ENCODE measurements at regions of chr19 and their contacts with region 1.

Region 1: DNA sequence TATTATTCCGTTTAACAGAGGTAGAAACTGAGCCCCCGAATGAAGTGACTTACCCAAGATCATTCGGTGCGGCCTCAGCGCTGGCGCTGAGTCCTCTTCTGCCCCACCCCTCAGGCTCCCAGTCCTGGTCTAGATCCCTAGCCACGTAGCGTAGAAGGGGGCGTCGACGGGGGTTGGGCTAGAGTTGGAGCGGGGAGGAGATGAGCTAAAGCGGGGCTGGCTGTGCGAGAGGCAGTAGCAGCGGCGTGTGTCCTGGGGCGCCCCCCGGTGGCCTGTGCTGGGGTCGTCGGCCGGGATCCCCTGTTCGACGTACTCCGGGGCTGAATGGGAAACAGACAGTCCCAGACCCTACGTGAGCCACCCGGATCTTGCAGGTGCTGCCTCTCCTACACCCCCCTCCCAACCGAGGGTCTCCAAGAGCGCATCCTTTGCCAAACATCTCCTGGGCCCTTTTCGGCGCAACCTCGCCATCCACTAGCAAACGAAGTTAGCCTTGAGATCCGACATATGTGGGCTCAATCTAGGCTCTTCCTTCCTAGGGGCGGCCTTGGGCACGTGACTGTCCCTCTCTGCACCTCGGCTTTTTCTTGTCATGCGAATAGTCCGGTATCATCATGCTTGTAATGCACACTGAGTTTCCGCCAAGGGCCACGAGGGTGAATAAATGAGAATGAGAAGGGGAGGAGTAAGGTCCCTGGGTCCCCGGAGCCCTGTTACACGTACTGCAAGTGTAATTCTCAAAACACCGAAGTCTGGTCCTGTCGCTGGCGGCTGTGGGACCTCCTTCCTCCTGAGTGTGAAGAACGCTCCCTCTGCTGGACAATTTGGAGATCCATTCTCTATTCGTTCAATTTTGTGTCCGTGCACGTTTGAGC is 47.7 kb downstream of the CYP4F22 start:
- DNase-seq: peak; percentile 93
- ATAC-seq: peak; percentile 90 to 98

Region 2: GRCh38 chr19:15091901-15092753 is 463.9 kb before region 1 on chr19:
- intact Hi-C with region 1: loop called (anchors 2 to 5 kb)
- DNase-seq: no peak
- ATAC-seq: peak; percentile 53 to 55

Region 3: DNA sequence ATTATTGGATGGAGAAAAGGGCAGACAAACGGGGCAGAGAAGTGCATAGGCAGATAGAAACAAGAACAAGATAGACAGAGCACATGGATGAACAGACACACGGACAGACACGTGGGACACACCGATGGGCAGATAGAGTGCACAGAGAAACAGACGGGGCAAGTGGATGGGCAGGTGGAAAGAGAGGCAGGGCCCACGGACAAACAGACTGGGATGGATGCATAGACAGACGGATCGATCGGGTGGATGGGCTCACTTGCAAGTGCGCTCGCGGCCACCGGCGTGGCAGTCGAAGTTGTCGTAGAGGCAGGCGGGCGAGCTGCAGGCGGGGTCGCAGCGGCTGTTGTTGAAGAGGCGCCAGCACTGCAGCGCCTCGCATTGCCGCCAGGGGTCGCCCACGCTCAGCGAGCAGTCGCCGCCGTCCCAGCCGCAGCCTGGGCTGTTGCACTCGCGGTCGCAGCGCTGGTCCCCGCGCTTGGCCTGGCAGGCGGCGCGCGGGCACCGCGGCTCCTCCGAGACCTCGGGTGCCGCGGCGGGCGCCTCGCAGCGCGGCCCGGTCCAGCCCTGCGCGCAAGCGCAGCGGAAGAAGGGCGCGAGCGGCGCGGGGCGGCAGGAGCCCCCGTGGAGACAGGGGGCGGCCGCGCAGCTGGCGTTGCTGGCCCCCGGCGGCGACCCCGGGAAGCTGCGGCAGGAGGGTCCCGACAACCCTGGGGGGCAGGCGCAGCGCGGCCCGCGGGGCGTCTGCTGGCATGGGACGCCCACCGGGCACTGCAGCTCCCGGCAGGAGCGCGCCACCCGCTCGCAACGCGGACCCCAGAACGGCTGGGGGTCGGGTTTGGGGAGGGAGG is 378.5 kb before region 1 on chr19:
- intact Hi-C with region 1: loop called (anchors 1 to 5 kb)
- DNase-seq: peak; percentile 85
- ATAC-seq: peak; percentile 83 to 90

Region 4: GRCh38 chr19:15264061-15264932 is 291.7 kb before region 1 on chr19:
- intact Hi-C with region 1: loop called (anchors 2 to 10 kb)
- DNase-seq: peak; percentile 81
- ATAC-seq: peak; percentile 23 to 46

Region 5: DNA sequence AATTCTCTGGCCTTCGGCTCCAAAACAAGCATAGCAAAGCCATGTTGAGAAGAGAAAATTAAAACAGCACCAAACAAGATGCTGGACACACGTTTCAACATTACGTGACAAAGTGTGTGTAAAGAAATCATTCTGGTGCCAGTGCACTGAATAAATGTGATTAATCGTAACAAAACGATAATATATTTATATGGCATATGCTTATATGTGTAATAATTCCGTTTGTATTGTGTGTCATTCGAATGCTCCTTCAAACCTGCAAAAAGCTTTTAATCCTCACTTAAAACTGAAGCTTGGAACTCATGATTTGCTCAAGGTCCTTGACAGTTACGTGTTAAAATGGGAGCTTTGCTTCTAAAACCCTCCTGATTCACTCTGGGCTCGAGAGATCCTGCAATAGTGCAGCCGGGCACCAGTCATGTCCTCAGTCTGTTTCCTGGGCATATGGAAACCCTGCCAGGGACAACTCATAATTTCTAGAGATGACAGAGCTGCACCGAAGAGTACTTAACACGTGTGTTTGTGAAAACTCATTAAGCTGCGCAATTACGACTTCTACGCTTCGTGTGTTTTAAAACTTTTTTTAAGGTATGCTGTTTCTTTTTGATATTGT is 136.5 kb before region 1 on chr19:
- intact Hi-C with region 1: loop called in 1 of 2 experiments (anchors 5 kb)
- DNase-seq: no peak
- ATAC-seq: no peak

Region 6: DNA sequence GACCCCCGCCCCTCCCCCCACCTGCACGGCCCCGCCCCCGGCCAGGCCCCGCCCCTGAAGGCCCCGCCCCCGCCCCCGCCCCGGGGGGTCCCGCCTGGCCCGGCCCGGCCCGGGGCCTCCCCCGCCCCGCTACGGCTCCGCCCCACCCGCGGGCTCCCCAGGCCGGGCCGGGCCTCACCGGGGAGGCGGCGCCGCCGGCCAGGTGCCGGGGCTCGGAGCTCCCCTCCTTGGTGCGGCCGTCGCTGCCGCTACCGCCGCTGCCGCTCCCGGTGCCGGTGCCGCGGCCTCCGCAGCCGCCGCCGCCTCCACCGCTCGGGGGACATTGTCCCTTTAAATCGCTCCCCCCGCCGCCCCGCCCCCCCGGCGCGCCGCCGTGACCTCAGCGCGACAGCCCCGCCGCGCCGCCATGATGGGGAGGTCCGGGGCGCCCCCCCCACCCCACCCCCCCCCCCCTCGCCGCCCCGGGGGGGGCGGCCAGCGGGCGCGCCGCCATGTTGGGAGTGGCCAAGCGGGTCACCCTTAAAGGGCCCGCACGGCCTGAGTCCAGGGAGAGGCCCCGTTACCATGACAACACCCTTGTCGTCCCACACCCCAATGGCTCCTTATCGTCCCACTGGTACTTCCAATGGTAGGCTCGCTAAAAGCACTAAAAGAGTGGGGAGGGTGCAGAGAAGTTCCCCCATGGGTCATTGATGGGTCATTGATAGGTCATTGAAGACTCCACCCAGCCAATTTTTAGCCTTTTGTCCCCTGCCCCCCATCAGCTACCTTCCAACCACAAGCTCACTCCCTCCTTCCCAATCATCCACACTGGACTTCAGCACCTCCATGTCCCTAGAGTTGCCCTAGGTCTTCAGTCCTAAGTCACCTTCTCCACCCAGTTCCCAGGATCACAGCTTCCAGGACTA is 106.1 kb before region 1 on chr19 and contains the start of gene WIZ:
- intact Hi-C with region 1: loop called (anchors 10 kb)
- DNase-seq: peak; percentile 91
- ATAC-seq: peak; percentile 7 to 53
- total RNA-seq, gene WIZ: 26.9 to 28.7 TPM

Region 7: DNA sequence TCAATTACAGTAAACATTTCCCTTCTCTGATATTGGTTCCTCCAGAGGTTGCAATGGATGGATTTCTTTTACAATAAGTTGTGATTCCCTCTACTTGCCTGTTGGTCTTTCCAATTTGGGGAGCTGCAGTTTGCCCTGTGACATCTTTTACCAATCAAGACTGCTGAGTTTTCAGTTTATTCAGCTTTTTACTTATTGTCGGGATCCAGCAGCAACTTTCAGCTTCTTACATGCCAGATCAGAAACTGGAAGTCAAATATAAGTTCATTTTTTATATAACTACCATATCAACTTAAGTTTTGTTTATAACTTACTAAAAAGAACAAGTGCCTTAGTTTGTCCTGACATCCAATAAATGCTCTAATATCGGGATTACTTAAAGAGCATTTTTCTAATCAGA is 192.2 kb after region 1 on chr19:
- intact Hi-C with region 1: no loop called
- DNase-seq: no peak
- ATAC-seq: no peak

Measured in left cardiac atrium (tissue), 4 donors.